SK-N-SH (cell line): ENCODE measurements at regions of chr17 and their contacts with region 1.

Region 1: GRCh38 chr17:40349920-40350909 is 14.3 kb downstream of the GJD3 start:
- DNase-seq: peak; percentile 79
- H3K4me3 ChIP-seq: no peak overlapping the region
- H3K27ac ChIP-seq: peak overlapping the region; percentile 39 to 99
- H3K4me1 ChIP-seq: peaks cover 47 to 95% of the 10 kb centered on the region in 2 experiments
- H3K27me3 ChIP-seq: no peaks in the 10 kb centered on the region
- CTCF ChIP-seq: no peak
- EP300 ChIP-seq: no peak
- RAD21 ChIP-seq: no peak

Region 2: GRCh38 chr17:40219073-40219860 is 130.9 kb before region 1 on chr17 and contains the start of gene WIPF2:
- CTCF ChIA-PET with region 1: no interaction called
- POLR2A ChIA-PET with region 1: no interaction called
- DNase-seq: peak; percentile 95
- H3K4me3 ChIP-seq: peak within 1 kb of the TSS; percentile 65 to 100
- H3K27ac ChIP-seq: peak within 1 kb of the TSS; percentile 90 to 94
- H3K4me1 ChIP-seq: peaks cover 0 to 4% of the 10 kb centered on the region in 2 experiments; a peak in 1 of 4 replicates
- H3K27me3 ChIP-seq: no peaks in the 10 kb centered on the region
- CTCF ChIP-seq: peak; percentile 56
- EP300 ChIP-seq: peak in 1 of 2 experiments; percentile 56; a peak in 1 of 4 replicates
- RAD21 ChIP-seq: no peak
- polyA plus RNA-seq, gene WIPF2: 5.9 and 6.8 TPM in 2 replicates

Region 3: DNA sequence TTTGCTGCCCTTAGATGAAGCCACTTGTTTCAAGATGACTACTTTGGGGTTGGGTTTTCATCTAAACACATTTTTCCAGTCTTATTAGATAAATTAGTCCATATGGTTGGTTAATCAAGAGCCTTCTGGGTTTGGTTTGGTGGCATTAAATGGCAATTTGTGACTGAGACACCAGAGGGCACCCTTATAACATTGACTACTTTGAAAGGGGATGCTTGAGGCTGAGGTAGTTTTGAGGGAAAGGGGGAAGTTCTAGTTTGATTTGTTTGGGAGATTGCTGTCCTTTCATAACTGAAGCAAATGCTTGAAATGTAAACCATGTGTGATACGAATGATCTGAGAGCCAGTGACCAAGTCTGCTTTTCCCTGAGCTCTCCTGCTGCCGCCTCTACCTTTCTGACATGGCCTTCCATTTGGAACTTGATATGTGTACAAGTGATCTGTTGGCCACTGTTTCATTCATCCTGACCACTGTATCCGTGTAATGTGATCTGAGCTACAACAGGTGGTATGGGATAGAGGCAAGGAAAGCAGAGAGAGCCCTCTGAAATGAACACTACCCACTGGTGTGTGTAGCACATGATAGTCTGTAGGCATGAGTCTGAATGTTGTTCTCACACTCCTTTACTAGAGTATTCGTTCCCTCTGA is 47.1 kb before region 1 on chr17:
- CTCF ChIA-PET with region 1: interaction called, 1,706 read pairs
- POLR2A ChIA-PET with region 1: interaction called, 16 read pairs
- DNase-seq: peak; percentile 63
- H3K4me3 ChIP-seq: no peak overlapping the region; a peak in 1 of 4 replicates
- H3K27ac ChIP-seq: peak overlapping the region; percentile 82 to 99
- H3K4me1 ChIP-seq: peaks cover 48 to 53% of the 10 kb centered on the region in 2 experiments
- H3K27me3 ChIP-seq: no peaks in the 10 kb centered on the region
- CTCF ChIP-seq: peak; percentile 86
- EP300 ChIP-seq: 0 out of 4 replicates have a peak, but pooled peaks of 1 of the 2 experiments have one; percentile 45
- RAD21 ChIP-seq: peak; percentile 96

Region 4: GRCh38 chr17:40309031-40309948 is 40.9 kb before region 1 on chr17 and contains the start of gene RARA:
- CTCF ChIA-PET with region 1: interaction called, 1,706 read pairs
- POLR2A ChIA-PET with region 1: interaction called, 16 read pairs
- DNase-seq: peak; percentile 67
- H3K4me3 ChIP-seq: peak within 1 kb of the TSS; percentile 65 to 69
- H3K27ac ChIP-seq: peak within 1 kb of the TSS; percentile 95 to 99
- H3K4me1 ChIP-seq: peaks cover 69 to 90% of the 10 kb centered on the region in 2 experiments
- H3K27me3 ChIP-seq: no peaks in the 10 kb centered on the region
- CTCF ChIP-seq: no peak
- EP300 ChIP-seq: no peak
- RAD21 ChIP-seq: peak; percentile 27
- polyA plus RNA-seq, gene RARA: 8.9 and 13.3 TPM in 2 replicates

Region 5: GRCh38 chr17:40331743-40332641 is 18.2 kb before region 1 on chr17:
- CTCF ChIA-PET with region 1: interaction called, 171 read pairs
- POLR2A ChIA-PET with region 1: interaction called, 24 read pairs
- DNase-seq: peak; percentile 97
- H3K4me3 ChIP-seq: no peak overlapping the region; a peak in 1 of 4 replicates
- H3K27ac ChIP-seq: peak overlapping the region; percentile 81 to 98
- H3K4me1 ChIP-seq: peaks cover 55 to 73% of the 10 kb centered on the region in 2 experiments
- H3K27me3 ChIP-seq: no peaks in the 10 kb centered on the region
- CTCF ChIP-seq: no peak
- EP300 ChIP-seq: peak; percentile 76 to 94; a peak in 3 of 4 replicates
- RAD21 ChIP-seq: no peak

Region 6: DNA sequence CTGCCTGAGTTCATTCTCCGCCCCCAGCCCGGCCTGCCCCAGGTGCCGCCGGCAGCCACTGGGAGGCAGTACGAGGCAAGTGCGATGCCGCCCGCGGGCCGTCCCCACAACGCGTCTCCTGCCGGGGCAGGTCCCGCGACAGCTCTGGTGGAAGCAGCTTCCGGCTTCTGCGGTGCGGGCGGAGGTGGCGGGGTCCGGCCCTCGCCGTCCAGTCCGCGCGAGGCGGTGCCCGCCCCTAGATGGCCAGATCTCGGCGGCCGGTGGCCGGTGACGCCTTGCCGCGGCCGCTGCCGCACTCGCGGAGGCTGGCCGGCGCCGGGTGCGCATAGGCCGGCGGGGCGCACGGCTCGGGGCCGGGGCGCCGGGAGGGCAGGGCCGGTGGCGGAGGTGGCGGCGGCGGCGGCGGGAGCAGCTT is 12.5 kb after region 1 on chr17:
- CTCF ChIA-PET with region 1: interaction called, 23 read pairs
- POLR2A ChIA-PET with region 1: interaction called, 3 read pairs
- DNase-seq: peak; percentile 93
- H3K4me3 ChIP-seq: peak overlapping the region; percentile 57 to 62
- H3K27ac ChIP-seq: no peak overlapping the region
- H3K4me1 ChIP-seq: peaks cover 6 to 16% of the 10 kb centered on the region in 2 experiments; a peak in 2 of 4 replicates
- H3K27me3 ChIP-seq: no peaks in the 10 kb centered on the region
- CTCF ChIP-seq: peak; percentile 72
- EP300 ChIP-seq: no peak
- RAD21 ChIP-seq: peak; percentile 68